WTC11 (cell line): ENCODE measurements at regions of chr17 and their contacts with region 1.

Region 1: DNA sequence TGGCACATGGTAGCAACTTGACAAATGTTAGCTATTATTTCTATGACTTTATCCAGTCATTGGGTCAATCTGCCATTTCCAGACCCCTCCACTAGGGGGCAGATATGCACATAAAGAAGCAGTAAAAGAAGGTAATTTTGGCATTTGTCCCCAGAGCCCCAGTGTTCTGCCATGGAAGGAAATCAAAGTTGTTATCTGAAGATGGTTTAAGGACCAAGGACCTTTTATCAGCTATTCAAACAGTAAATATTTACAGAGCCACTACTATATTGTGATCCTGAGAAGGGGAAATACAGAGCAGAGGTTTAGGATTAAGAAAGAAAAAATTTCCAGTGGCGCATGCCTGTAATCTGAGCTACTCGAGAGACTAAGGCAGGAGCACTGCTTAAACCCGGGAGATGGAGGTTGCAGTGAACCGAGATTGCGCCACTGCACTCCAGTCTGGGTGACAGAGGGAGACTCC is 20.0 kb downstream of the TRAF4 start:
- DNase-seq: peak; percentile 81
- ATAC-seq: no peak
- H3K4me3 Mint-ChIP-seq: no peak overlapping the region
- H3K27ac Mint-ChIP-seq: peak overlapping the region; percentile 96
- H3K4me1 Mint-ChIP-seq: peaks cover 57% of the 10 kb centered on the region
- H3K27me3 Mint-ChIP-seq: no peaks in the 10 kb centered on the region
- CTCF ChIP-seq: peak; percentile 92

Region 2: DNA sequence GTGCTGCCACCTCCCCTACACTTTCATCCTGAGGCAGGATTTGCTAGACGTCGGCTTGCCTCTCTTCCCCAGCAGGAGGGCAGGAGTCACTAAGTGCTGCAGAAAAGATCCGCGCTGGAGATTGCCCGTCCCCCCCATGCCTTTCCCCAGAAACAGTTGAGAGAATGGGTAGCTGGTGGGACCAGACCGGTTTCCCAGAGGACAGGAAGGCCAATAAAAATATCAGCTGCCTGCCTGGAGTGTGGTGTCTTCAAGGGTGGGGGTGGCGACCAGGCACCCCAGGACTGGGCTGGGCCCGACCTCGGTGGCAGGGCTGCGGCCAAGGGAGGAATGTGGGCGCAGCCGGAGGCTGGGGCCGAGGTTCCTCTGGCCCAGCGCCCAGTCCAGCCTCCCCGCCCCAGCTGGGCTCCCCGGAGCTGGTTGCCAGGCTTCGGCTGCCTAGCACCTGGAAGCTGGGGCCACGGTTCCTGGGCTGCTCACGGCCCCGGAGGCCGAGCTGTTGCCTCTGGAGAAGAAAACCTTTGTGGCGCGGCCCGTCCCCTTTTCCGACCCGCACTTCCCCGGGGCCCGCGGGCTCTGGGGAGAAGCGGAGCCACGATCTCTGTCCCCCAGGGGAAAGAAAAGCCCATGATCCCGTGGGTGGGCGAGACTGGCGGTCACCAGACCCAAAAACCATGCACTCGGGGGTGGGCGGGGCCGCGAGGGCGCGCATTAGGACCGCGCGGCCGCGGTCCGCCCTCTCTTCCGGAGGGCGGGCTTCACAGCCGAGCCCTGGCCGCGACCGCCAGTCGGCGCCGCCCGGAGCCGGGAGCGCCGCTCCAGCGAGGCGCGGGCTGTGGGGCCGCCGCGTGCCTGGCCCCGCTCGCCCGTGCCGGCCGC is 20.4 kb before region 1 on chr17 and contains the start of gene TRAF4:
- CTCF ChIA-PET with region 1: interaction called, 109 read pairs
- POLR2A ChIA-PET with region 1: interaction called, 11 read pairs
- DNase-seq: peak; percentile 83
- ATAC-seq: peak; percentile 57
- H3K4me3 Mint-ChIP-seq: peak within 1 kb of the TSS; percentile 88
- H3K27ac Mint-ChIP-seq: peak within 1 kb of the TSS; percentile 94
- H3K4me1 Mint-ChIP-seq: peaks cover 39% of the 10 kb centered on the region
- H3K27me3 Mint-ChIP-seq: no peaks in the 10 kb centered on the region
- CTCF ChIP-seq: no peak
- total RNA-seq, gene TRAF4: 192 to 268 TPM (median 192 TPM) in 3 replicates

Region 3: DNA sequence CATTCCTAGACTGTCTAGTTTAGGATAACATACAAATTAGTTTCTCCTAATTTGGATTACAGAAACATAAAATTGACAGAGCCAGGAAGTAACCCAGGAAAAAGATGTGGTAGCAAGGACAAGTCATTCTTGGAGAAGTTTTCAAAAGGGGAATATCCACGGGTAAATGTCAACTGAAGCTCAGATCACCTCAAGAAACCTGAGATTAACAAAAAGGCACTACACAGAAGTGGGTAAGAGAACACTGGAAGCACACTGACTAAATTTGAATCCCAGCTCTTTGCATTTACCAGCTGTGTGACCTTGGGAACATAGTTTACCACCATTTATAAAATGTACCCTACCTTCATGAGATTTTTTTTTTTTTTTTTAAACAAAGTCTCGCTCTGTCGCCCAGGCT is 19.3 kb after region 1 on chr17:
- CTCF ChIA-PET with region 1: interaction called, 13 read pairs
- POLR2A ChIA-PET with region 1: no interaction called
- DNase-seq: no peak
- ATAC-seq: no peak
- H3K4me3 Mint-ChIP-seq: no peak overlapping the region
- H3K27ac Mint-ChIP-seq: peak overlapping the region; percentile 75
- H3K4me1 Mint-ChIP-seq: peaks cover 13% of the 10 kb centered on the region
- H3K27me3 Mint-ChIP-seq: no peaks in the 10 kb centered on the region
- CTCF ChIP-seq: no peak

Region 4: GRCh38 chr17:28828294-28829040 is 64.6 kb after region 1 on chr17:
- CTCF ChIA-PET with region 1: interaction called, 36 read pairs
- POLR2A ChIA-PET with region 1: no interaction called
- DNase-seq: peak; percentile 5
- ATAC-seq: no peak
- H3K4me3 Mint-ChIP-seq: no peak overlapping the region
- H3K27ac Mint-ChIP-seq: no peak overlapping the region
- H3K4me1 Mint-ChIP-seq: no peaks in the 10 kb centered on the region
- H3K27me3 Mint-ChIP-seq: no peaks in the 10 kb centered on the region
- CTCF ChIP-seq: no peak

Region 5: DNA sequence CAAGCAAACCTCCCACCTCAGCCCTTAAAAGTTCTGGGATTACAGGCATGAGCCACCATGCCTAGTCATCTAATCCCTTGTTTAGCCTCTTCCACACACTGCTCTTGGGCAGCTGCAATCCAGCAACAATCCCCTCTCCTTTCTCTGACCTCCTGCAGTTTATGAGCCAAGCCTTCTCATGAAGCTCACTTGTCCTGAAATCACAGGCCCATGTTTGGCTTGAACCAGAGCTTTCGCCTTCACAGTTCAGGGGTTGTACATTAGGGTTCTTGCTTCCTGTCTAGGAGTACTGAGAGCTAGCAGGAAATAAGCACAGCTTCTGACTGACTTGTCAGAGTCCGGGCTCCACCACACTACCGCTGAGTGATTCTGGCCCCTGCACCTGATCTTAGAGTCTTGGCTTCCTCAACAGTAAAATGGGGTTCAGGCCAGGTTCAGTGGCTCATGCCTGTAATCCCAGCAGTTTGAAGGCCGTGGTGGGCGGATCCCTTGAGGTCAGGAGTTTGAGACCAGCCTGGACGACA is 107.3 kb after region 1 on chr17:
- CTCF ChIA-PET with region 1: interaction called, 41 read pairs
- POLR2A ChIA-PET with region 1: interaction called, 3 read pairs
- DNase-seq: no peak
- ATAC-seq: no peak
- H3K4me3 Mint-ChIP-seq: no peak overlapping the region
- H3K27ac Mint-ChIP-seq: peak overlapping the region; percentile 60; the same call in 1 of the 2 replicates
- H3K4me1 Mint-ChIP-seq: no peaks in the 10 kb centered on the region
- H3K27me3 Mint-ChIP-seq: peaks cover 20% of the 10 kb centered on the region
- CTCF ChIP-seq: no peak

Region 6: DNA sequence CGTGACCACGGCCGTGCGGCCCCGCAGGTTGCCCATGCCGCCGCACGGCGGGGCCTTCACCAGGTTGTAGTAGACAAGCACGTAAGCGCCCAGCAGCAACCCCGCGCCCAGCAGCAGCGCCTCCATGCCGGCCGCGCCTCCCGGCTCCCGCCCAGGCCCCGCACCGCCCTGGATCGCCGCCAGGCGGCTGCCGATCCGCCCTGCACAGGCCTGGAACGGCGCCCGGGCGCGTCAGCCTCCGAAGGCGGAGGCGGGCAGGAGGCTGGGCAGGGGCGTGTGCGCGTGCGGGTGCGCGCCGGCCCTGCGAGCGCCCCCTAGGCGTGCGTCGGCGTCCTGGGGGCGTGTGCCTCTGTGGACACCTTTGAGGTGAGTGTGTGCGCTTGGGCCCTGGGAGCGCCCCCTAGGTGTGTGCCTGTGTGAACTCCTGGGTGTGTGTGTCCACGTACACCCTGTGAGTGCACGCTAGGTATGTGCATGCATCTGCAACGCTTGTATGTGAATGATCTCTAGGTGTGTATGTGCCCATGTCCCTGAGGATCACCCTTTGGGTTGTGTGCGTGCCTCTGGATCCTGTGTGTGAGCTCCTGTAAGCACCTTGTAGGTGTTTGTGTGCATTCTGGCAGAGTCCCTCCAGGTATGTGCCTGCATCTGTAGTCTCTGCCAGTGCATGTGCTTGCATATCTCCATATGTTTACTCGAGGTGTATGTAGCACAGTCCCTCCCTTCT is 139.1 kb after region 1 on chr17 and contains the start of gene DHRS13:
- CTCF ChIA-PET with region 1: interaction called, 33 read pairs
- POLR2A ChIA-PET with region 1: no interaction called
- DNase-seq: peak; percentile 95
- ATAC-seq: peak; percentile 89
- H3K4me3 Mint-ChIP-seq: peak within 1 kb of the TSS; percentile 85
- H3K27ac Mint-ChIP-seq: peak within 1 kb of the TSS; percentile 61
- H3K4me1 Mint-ChIP-seq: peaks cover 31% of the 10 kb centered on the region
- H3K27me3 Mint-ChIP-seq: no peaks in the 10 kb centered on the region
- CTCF ChIP-seq: peak; percentile 100
- total RNA-seq, gene DHRS13: 26.5 to 29.5 TPM (median 28.5 TPM) in 3 replicates